GM12878 (cell line): ENCODE measurements at regions of chr6 and their contacts with region 1.

Region 1: DNA sequence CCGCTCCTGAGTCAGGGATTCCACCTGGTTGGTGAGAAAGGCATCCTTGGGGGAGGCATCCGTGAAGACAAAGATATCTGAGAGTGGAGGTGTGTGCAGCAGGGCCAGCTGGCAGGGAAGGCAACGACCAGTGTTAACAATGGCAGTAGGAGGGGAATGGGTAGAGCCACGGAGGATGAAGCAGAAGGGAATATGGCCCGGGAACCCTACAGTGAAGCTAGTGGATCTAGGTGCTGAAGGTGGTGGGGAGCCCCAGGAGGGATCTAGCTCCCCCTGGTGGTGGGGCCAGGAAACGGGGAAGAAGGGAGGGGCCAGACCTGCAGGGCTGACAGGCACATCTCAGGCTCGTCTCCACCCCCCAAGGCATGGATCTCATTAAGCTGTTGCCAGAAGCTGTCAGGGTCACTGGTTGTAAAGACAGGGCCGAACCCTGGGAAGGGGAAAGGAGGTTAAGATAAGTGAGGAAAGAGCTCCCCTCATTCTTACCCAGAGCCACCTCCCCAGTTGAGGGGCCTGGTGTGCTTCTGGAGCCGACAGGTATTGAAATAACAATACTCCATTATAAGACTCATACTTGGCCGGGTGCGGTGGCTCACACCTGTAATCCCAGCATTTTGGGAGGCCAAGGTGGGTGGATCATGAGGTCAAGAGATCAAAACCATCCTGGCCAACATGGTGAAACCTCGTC is 7.3 kb downstream of the VWA7 start:
- DNase-seq: peak; percentile 36
- ATAC-seq: peak; percentile 97
- H3K4me3 ChIP-seq: no peak overlapping the region
- H3K27ac ChIP-seq: no peak overlapping the region
- H3K4me1 ChIP-seq: no peaks in the 10 kb centered on the region
- H3K27me3 ChIP-seq: no peaks in the 10 kb centered on the region
- CTCF ChIP-seq: peak; percentile 91 to 95 (median 91)
- EP300 ChIP-seq: no peak
- POLR2A ChIP-seq: no peak
- RAD21 ChIP-seq: peak; percentile 72

Region 2: GRCh38 chr6:31139599-31139998 is 630.2 kb before region 1 on chr6:
- CTCF ChIA-PET with region 1: no interaction called
- POLR2A ChIA-PET with region 1: no interaction called
- RAD21 ChIA-PET with region 1: no interaction called
- SMC1A ChIA-PET with region 1: no interaction called
- in situ Hi-C with region 1: no loop called
- intact Hi-C with region 1: no loop called
- DNase-seq: no peak
- ATAC-seq: no peak
- H3K4me3 ChIP-seq: no peak overlapping the region
- H3K27ac ChIP-seq: no peak overlapping the region
- H3K4me1 ChIP-seq: peaks cover 3% of the 10 kb centered on the region
- H3K27me3 ChIP-seq: no peaks in the 10 kb centered on the region
- CTCF ChIP-seq: no peak
- EP300 ChIP-seq: no peak
- POLR2A ChIP-seq: no peak
- RAD21 ChIP-seq: no peak

Region 3: DNA sequence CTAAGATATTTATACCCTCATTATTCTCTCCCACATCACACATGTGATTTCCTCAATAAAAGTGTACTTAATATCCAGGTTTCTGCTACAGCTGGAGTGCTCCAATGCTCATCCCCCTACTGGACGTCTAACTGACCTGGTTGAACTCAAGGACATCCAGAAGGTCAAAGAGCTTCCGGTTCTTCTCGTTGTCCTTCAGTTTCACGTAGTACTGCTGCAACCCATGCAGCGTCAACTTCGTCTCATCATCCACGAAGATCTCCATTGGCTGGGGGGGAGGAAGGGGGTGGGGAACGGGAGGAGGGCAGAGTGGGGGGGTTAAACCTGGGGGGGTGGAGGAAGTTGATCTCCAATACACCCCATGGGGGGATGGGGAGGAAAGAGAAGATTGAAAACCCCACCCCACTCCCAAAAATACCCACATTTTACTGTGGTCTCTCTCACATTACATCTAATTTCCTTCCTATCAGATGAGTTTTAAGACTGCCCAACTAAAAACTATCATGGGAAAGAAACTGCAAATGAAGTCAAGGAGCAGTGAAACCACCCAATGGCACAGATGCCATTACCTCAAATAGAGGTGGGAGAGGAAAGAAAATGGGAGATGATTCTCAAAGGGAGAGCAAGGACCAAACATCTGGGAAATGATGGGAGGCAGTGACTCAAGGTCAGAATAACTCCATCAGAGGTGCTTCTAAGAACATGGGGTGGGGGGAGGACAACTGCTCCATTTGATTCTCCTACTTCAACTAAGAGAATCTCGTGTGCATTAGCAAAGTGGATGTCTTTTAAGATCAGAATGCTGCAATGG is 237.0 kb before region 1 on chr6:
- CTCF ChIA-PET with region 1: no interaction called
- POLR2A ChIA-PET with region 1: no interaction called
- RAD21 ChIA-PET with region 1: no interaction called
- SMC1A ChIA-PET with region 1: no interaction called
- in situ Hi-C with region 1: no loop called
- intact Hi-C with region 1: no loop called
- DNase-seq: no peak
- ATAC-seq: no peak
- H3K4me3 ChIP-seq: no peak overlapping the region
- H3K27ac ChIP-seq: no peak overlapping the region
- H3K4me1 ChIP-seq: no peaks in the 10 kb centered on the region
- H3K27me3 ChIP-seq: no peaks in the 10 kb centered on the region
- CTCF ChIP-seq: no peak
- EP300 ChIP-seq: no peak
- POLR2A ChIP-seq: peak; percentile 24; the same call in 1 of the 2 replicates
- RAD21 ChIP-seq: no peak

Region 4: GRCh38 chr6:31607317-31607716 is 162.5 kb before region 1 on chr6:
- CTCF ChIA-PET with region 1: no interaction called
- POLR2A ChIA-PET with region 1: no interaction called
- RAD21 ChIA-PET with region 1: no interaction called
- SMC1A ChIA-PET with region 1: no interaction called
- in situ Hi-C with region 1: no loop called
- intact Hi-C with region 1: no loop called
- DNase-seq: no peak
- ATAC-seq: no peak
- H3K4me3 ChIP-seq: no peak overlapping the region
- H3K27ac ChIP-seq: no peak overlapping the region
- H3K4me1 ChIP-seq: no peaks in the 10 kb centered on the region
- H3K27me3 ChIP-seq: no peaks in the 10 kb centered on the region
- CTCF ChIP-seq: no peak
- EP300 ChIP-seq: no peak
- POLR2A ChIP-seq: no peak
- RAD21 ChIP-seq: no peak

Region 5: GRCh38 chr6:31712296-31712695 is 57.5 kb before region 1 on chr6:
- CTCF ChIA-PET with region 1: interaction called, 14 read pairs
- POLR2A ChIA-PET with region 1: interaction called, 4 read pairs
- RAD21 ChIA-PET with region 1: no interaction called
- SMC1A ChIA-PET with region 1: interaction called, 3 read pairs
- in situ Hi-C with region 1: no loop called
- intact Hi-C with region 1: no loop called
- DNase-seq: no peak
- ATAC-seq: peak; percentile 81
- H3K4me3 ChIP-seq: no peak overlapping the region
- H3K27ac ChIP-seq: no peak overlapping the region
- H3K4me1 ChIP-seq: no peaks in the 10 kb centered on the region
- H3K27me3 ChIP-seq: peaks cover 0 to 2% of the 10 kb centered on the region in 2 experiments; a peak in 3 of 4 replicates
- CTCF ChIP-seq: peak; percentile 7 to 10 (median 9); a peak in 2 of 6 replicates
- EP300 ChIP-seq: no peak
- POLR2A ChIP-seq: no peak
- RAD21 ChIP-seq: no peak

Region 6: DNA sequence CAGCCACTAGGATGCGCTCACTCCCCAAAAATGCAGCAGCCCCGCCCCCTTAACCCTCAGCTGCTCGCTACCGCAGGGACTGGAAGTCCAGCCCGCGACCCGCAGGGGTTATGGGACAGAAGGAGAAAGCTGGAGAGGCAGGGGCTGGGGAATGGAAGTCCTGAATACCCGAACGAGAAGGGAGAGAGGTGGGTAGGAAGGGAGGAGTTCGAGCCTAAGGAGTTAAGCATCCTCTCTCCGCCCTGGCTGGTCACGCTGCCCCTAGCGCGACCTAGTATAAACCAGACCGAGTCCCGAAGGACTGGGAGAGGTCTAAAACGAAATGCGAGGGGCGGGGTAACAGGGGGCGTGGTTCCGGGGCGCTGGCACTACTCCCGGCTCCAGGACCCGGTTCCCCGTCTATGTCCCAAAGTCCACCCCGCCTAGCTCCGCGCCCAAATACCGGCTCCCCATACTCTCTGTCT is 40.3 kb before region 1 on chr6:
- CTCF ChIA-PET with region 1: interaction called, 208 read pairs
- POLR2A ChIA-PET with region 1: interaction called, 6 read pairs
- RAD21 ChIA-PET with region 1: interaction called, 44 read pairs
- SMC1A ChIA-PET with region 1: interaction called, 41 read pairs
- in situ Hi-C with region 1: no loop called
- intact Hi-C with region 1: loop called (anchors 1 kb)
- DNase-seq: peak; percentile 35
- ATAC-seq: peak; percentile 84
- H3K4me3 ChIP-seq: peak overlapping the region; percentile 78
- H3K27ac ChIP-seq: peak overlapping the region; percentile 13; the same call in 1 of the 2 replicates
- H3K4me1 ChIP-seq: peaks cover 33% of the 10 kb centered on the region
- H3K27me3 ChIP-seq: no peaks in the 10 kb centered on the region
- CTCF ChIP-seq: peak in 2 of 3 experiments; percentile 84 to 94; a peak in 3 of 6 replicates
- EP300 ChIP-seq: no peak
- POLR2A ChIP-seq: no peak
- RAD21 ChIP-seq: peak; percentile 90

Region 7: DNA sequence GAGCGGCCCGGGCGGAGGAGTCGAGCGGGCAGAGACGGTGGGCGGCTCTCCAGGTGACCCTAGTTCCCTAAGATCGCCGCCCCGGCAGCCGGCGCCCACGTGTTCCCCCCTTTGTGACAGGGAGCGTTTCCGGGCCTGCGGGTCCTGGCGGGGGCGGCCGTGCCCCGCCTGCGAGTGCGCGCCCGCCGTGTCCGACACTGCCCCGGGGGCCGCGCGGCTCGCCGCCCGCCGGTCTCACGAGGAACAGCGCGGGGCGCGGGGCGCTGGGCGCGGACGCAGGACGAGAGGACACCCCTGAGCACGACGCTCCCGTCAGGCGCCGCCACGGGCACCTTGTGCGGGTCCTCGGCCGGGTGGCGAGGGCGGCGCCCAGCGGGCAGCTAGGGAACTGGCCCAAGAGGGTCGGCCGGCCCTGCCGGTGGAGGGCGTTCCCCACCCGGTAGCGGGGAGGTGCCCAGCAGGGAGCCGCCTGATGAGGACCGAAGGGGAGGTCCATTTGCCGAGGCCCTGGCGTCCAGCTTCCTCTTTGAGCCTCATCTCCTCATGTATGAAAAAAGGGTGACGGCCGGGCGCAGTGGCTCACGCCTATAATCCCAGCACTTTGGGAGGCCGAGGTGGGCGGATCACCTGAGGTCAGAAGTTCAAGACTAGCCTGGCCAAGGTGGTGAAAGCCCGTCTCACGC is 25.9 kb after region 1 on chr6 and contains the start of gene VARS1:
- CTCF ChIA-PET with region 1: interaction called, 17 read pairs
- POLR2A ChIA-PET with region 1: interaction called, 6 read pairs
- RAD21 ChIA-PET with region 1: interaction called, 3 read pairs
- SMC1A ChIA-PET with region 1: interaction called, 4 read pairs
- in situ Hi-C with region 1: no loop called
- intact Hi-C with region 1: no loop called
- DNase-seq: peak; percentile 62
- ATAC-seq: peak; percentile 88
- H3K4me3 ChIP-seq: peak within 1 kb of the TSS; percentile 81
- H3K27ac ChIP-seq: peak within 1 kb of the TSS; percentile 95
- H3K4me1 ChIP-seq: peaks cover 4% of the 10 kb centered on the region
- H3K27me3 ChIP-seq: no peaks in the 10 kb centered on the region
- CTCF ChIP-seq: peak; percentile 84 to 98 (median 88); a peak in 5 of 6 replicates
- EP300 ChIP-seq: no peak
- POLR2A ChIP-seq: peak; percentile 76
- RAD21 ChIP-seq: peak; percentile 53
- polyA plus RNA-seq, gene VARS1: 1.2 to 5.7 TPM

Region 8: DNA sequence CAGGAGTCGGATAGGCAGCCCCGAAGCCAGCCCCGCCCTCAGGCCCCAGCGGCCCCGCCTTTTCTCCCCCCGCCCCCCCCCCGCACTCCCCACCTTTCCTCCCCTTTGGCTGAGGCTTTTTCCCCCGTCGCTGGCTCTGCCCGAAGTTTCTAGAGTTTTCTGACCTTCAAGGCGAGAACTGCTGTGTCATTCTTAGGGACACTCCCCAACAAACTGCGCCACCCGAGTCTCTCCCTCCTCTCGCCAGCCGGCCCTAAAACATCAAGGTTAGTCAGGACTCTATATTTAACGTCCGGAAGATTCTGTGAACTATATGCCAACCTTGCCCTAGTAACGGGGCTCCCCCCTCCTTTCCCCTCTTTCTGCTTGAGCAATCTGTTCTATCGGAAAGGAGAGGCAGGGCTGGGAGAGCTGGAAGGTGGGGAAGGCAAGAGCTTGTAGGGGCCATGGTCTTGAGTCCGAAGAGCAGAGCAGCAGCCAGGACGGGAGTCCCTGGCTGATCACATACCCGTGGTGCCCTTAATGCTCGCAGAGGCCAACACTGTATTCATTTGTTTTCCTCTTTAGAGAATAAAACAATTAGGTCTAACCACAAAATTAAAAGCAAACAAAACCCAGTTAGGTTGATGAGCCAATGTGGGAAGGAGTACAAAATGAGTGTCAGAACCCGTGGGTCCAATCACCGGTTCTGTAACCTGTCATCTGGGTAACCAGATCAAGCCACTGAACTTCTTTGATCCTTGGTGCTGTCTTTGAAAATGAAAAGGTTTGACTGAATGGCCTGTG is 52.4 kb after region 1 on chr6:
- CTCF ChIA-PET with region 1: interaction called, 9 read pairs
- POLR2A ChIA-PET with region 1: interaction called, 6 read pairs
- RAD21 ChIA-PET with region 1: interaction called, 10 read pairs
- SMC1A ChIA-PET with region 1: interaction called, 11 read pairs
- in situ Hi-C with region 1: no loop called
- intact Hi-C with region 1: loop called (anchors 10 kb)
- DNase-seq: no peak
- ATAC-seq: peak; percentile 56
- H3K4me3 ChIP-seq: peak overlapping the region; percentile 78
- H3K27ac ChIP-seq: peak overlapping the region; percentile 50
- H3K4me1 ChIP-seq: peaks cover 14% of the 10 kb centered on the region
- H3K27me3 ChIP-seq: no peaks in the 10 kb centered on the region
- CTCF ChIP-seq: no peak
- EP300 ChIP-seq: no peak
- POLR2A ChIP-seq: peak; percentile 7; the same call in 1 of the 2 replicates
- RAD21 ChIP-seq: no peak

Region 9: GRCh38 chr6:31908791-31909190 is 139.0 kb after region 1 on chr6:
- CTCF ChIA-PET with region 1: no interaction called
- POLR2A ChIA-PET with region 1: no interaction called
- RAD21 ChIA-PET with region 1: no interaction called
- SMC1A ChIA-PET with region 1: no interaction called
- in situ Hi-C with region 1: no loop called
- intact Hi-C with region 1: no loop called
- DNase-seq: peak; percentile 68
- ATAC-seq: peak; percentile 95
- H3K4me3 ChIP-seq: no peak overlapping the region
- H3K27ac ChIP-seq: no peak overlapping the region
- H3K4me1 ChIP-seq: peaks cover 25% of the 10 kb centered on the region
- H3K27me3 ChIP-seq: no peaks in the 10 kb centered on the region
- CTCF ChIP-seq: no peak
- EP300 ChIP-seq: peak in 1 of 2 experiments; percentile 51; a peak in 1 of 4 replicates
- POLR2A ChIP-seq: no peak
- RAD21 ChIP-seq: no peak